Breast epithelium (tissue), 4 donors: ENCODE measurements at regions of chr14 and their contacts with region 1.

Region 1: DNA sequence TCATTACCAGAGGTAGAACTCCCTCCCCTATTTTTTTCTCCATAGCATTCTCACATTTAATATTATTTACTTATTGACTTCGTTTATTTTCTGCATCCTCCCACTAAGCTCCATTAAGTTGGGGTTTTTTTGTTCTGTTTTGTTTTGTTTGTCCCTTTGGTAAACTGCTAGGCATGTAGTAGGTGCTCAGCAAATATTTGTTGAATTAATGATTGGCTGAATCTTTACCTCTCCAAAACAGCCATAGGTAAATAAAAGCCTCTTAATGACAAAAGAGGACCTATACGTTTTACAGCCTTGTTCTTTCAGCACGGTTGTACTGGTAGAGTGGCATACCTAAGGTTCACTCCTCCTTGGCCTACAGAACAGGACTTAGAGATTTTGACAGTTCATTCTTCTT is 52.0 kb downstream of the PRORP start:
- DNase-seq: no peak
- H3K4me3 ChIP-seq: no peak overlapping the region
- H3K27ac ChIP-seq: no peak overlapping the region
- H3K4me1 ChIP-seq: no peaks in the 10 kb centered on the region
- H3K27me3 ChIP-seq: no peaks in the 10 kb centered on the region
- CTCF ChIP-seq: no peak
- POLR2A ChIP-seq: no peak

Region 2: DNA sequence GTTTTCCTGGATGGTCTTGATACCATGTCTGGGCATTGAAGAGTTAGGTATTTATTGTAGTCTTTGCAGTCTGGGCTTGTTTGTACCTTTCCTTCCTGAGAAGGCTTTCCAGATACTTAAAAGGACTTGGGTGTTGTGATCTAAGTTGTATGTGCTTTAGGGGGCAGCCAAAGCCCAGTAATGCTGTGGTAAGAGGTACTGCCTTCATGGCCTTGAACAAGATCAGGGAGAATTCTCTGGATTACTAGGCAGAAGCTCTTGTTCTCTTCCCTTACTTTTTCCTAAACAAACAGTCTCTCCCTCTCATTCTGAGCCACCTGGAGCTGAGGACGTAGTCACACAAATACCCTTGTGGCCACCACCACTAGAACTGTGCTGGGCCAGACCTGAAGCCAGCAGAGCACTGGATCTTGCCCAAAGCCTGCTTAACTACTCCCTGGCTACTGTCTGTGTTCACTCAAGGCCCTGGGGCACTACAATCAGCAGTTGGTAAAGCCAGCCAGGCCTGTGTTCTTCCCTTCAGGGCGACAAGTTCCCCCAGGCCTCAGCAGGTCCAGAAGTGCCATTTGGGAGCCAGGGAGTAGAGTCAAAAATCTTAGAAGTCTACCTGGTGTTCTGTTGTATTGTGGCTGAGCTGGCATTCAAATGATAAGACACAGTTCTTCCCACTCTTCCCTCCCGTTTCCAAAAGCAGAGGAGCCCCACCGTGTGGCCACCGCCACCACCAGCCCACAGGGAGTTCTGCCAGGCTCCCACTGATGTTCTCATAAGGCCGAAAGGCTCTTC is 40.6 kb before region 1 on chr14:
- intact Hi-C with region 1: loop called (anchors 2 kb)
- DNase-seq: no peak
- H3K4me3 ChIP-seq: no peak overlapping the region
- H3K27ac ChIP-seq: no peak overlapping the region
- H3K4me1 ChIP-seq: no peaks in the 10 kb centered on the region
- H3K27me3 ChIP-seq: no peaks in the 10 kb centered on the region
- CTCF ChIP-seq: no peak
- POLR2A ChIP-seq: no peak